ENCODE measurements at regions of chr11 and their contacts with region 1.

Region 1: DNA sequence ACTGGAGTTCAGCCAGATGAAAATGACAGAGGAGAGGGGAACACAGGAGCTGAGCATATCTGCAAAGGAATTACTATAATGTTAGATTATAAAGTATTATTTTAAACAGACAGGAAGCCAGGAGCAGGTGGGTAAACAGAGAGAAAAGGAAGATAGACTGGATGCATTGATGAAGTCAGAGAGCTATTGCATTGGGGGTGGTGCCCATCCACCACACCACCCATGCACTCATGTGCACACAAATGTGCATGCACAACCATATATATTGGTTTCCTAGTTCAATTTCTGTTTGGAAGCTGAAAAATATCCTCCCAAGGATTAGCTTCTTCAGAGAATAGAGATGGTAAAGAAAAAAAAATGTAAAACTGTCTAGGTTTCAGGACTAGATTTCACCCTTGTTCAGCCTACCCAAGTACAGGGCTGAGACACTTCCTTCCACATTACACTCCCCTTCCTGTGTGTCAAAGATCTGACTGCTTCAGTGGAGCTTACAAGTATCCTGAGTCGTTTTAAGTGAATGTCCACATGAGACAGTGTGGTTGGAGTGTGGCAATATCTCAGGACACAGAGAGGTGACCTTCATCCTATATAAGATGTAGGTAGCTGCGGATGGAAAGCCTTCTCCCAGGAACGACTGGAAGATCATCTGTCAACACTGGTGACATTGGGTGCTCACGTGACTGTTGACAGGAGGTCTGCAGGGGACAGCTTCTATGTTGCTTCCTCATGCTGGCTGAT is 12.2 kb upstream of the SMPD1 start:
- DNase-seq: no peak
- H3K4me3 ChIP-seq: no peak overlapping the region
- H3K27ac ChIP-seq: no peak overlapping the region
- H3K27me3 ChIP-seq: peaks cover 2% of the 10 kb centered on the region
- CTCF ChIP-seq: no peak

Region 2: DNA sequence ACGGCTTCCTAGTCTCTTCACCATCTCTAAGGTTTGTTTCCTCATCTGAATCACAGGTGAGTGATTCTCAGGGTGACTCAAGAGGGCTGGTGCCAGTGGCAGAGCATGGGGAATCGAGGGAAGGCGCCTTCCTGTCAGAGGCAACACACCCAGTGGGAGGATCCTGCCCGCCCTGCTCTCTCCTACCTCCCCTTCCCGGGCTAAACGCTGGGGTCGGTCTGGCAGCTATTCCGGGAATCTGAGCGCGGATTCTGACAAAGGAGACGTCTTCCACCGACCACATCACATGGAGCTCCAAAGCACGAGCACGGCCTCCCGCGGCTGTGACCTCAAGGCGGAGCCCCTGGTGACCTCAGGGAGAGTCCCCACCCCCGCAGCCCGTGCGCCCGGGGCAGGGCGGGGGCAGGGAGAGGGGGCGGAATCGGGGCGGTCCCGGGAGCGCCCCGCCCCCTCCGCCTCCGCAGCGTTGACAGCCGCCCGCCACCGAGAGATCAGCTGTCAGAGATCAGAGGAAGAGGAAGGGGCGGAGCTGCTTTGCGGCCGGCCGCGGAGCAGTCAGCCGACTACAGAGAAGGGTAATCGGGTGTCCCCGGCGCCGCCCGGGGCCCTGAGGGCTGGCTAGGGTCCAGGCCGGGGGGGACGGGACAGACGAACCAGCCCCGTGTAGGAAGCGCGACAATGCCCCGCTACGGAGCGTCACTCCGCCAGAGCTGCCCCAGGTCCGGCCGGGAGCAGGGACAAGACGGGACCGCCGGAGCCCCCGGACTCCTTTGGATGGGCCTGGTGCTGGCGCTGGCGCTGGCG is 12.1 kb after region 1 on chr11 and contains the start of gene SMPD1:
- CTCF ChIA-PET with region 1: interaction called, 63 read pairs
- POLR2A ChIA-PET with region 1: interaction called, 7 read pairs
- DNase-seq: peak; percentile 58
- H3K4me3 ChIP-seq: peak within 1 kb of the TSS; percentile 84
- H3K27ac ChIP-seq: peak within 1 kb of the TSS; percentile 88
- H3K27me3 ChIP-seq: no peaks in the 10 kb centered on the region
- CTCF ChIP-seq: no peak
- polyA plus RNA-seq, gene SMPD1: 68.0 and 83.7 TPM in 2 replicates

Region 3: GRCh38 chr11:6443269-6444003 is 65.4 kb after region 1 on chr11:
- CTCF ChIA-PET with region 1: interaction called, 604 read pairs
- POLR2A ChIA-PET with region 1: interaction called, 4 read pairs
- DNase-seq: no peak
- H3K4me3 ChIP-seq: no peak overlapping the region
- H3K27ac ChIP-seq: no peak overlapping the region
- H3K27me3 ChIP-seq: no peaks in the 10 kb centered on the region
- CTCF ChIP-seq: peak; percentile 89

Region 4: DNA sequence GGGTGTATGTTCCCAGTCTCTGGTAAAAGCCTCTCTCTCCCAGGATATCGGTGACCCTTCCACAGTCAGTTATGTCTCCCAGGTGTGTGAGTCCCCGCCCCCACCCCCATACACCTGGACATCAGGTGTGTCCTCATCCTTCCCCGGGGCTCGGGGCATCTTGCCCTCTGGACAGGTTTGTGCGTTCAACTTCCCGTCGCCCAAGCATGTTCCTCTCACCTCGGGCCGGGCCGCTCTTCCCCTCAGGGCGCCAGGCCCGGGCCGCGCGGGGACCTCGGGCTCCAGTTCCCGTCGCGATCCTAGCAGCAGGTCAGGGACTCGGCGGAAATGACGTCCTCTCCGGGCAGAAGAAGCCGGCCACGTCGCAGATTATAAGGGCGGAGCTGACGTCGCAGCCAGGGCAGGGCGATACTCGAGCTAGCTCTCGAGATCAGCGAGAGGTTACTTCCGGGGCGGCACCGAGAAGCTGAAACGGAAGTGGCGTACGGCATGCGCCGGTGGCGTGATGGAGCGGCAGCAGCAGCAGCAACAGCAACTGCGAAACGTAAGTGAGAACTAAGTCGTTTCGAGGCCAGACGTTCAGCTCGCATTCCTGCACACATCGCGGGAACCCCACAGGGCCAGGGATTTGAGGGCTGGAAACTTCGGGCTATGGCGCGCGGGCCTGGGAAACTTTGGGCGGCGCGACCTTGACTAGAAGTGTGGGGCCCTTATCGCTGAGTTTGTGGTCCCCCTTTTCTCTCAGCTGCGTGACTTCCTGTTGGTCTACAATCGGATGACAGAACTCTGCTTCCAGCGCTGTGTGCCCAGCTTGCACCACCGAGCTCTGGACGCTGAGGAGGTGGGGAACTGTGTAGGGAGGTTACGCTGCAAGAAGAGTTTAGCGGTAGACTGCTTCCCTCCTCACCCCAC is 103.2 kb after region 1 on chr11 and contains the starts of genes ARFIP2 and TIMM10B:
- CTCF ChIA-PET with region 1: interaction called, 44 read pairs
- POLR2A ChIA-PET with region 1: interaction called, 6 read pairs
- DNase-seq: peak; percentile 95
- H3K4me3 ChIP-seq: peak within 1 kb of the TSS; percentile 97
- H3K27ac ChIP-seq: peak within 1 kb of the TSS; percentile 94
- H3K27me3 ChIP-seq: no peaks in the 10 kb centered on the region
- CTCF ChIP-seq: no peak
- polyA plus RNA-seq, gene ARFIP2: 79.1 and 88.2 TPM in 2 replicates
- polyA plus RNA-seq, gene TIMM10B: 26.7 and 33.1 TPM in 2 replicates

Region 5: GRCh38 chr11:6619004-6619745 is 241.1 kb after region 1 on chr11 and contains the start of gene TPP1:
- CTCF ChIA-PET with region 1: interaction called, 10 read pairs
- POLR2A ChIA-PET with region 1: no interaction called
- DNase-seq: peak; percentile 86
- H3K4me3 ChIP-seq: peak within 1 kb of the TSS; percentile 93
- H3K27ac ChIP-seq: peak within 1 kb of the TSS; percentile 73
- H3K27me3 ChIP-seq: peaks cover 2% of the 10 kb centered on the region
- CTCF ChIP-seq: no peak
- polyA plus RNA-seq, gene TPP1: 128 and 152 TPM in 2 replicates